ENCODE measurements at regions of chr20 and their contacts with region 1.

Region 1: DNA sequence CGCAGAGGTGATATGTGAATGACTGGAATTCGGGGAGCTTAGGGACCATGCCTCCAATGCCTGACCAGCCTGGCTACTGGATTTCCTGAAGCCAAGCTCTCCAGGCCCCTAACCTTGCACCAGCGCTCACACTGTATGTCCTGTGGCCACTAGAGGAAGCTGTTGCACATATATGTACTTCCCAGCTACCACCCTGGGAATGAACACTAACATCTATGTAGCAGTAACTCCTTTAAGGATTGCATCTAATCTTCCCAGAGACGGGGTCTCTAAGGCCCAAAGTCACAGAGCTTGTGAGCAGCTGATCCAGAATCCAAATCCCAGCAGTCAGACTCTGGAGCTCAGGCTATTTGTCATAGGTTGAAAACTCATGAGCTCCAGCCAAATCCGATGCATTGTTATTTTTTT is 20.4 kb upstream of the BPIFB1 start:
- DNase-seq: peak; percentile 24
- ATAC-seq: peak; percentile 30
- H3K4me3 Mint-ChIP-seq: no peak overlapping the region
- H3K27ac Mint-ChIP-seq: no peak overlapping the region
- H3K4me1 Mint-ChIP-seq: no peaks in the 10 kb centered on the region
- H3K27me3 Mint-ChIP-seq: peaks cover 12% of the 10 kb centered on the region
- CTCF ChIP-seq: peak; percentile 26

Region 2: GRCh38 chr20:33133373-33133941 is 129.2 kb before region 1 on chr20:
- CTCF ChIA-PET with region 1: no interaction called
- POLR2A ChIA-PET with region 1: no interaction called
- intact Hi-C with region 1: no loop called
- DNase-seq: no peak
- ATAC-seq: no peak
- H3K4me3 Mint-ChIP-seq: no peak overlapping the region
- H3K27ac Mint-ChIP-seq: no peak overlapping the region
- H3K4me1 Mint-ChIP-seq: no peaks in the 10 kb centered on the region
- H3K27me3 Mint-ChIP-seq: peaks cover 4% of the 10 kb centered on the region
- CTCF ChIP-seq: no peak

Region 3: DNA sequence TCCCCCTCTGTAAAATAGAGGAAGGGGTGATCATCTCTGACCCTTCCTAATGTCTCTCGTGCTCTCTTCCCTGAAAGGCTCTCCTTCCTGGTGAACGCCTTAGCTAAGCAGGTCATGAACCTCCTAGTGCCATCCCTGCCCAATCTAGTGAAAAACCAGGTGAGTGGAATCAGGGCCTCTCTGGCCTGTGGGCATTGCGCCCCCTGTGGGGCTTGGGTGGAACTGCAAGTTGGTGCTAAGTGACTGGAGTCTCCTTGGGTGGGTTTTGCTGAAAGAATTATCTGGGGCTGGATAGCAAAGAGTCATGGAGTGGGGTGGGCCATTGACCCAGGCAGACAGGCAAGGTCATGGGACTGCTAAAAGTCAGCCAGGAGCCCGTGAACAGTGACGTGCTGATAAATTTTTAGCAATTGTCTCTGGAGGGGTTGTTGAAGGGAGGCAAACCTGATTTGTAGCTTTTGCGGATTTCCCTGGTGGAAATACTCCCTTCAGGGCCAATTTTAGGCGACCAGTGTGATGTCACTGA is 29.2 kb after region 1 on chr20:
- CTCF ChIA-PET with region 1: interaction called, 13 read pairs
- POLR2A ChIA-PET with region 1: no interaction called
- intact Hi-C with region 1: no loop called
- DNase-seq: peak; percentile 78
- ATAC-seq: peak; percentile 60
- H3K4me3 Mint-ChIP-seq: no peak overlapping the region
- H3K27ac Mint-ChIP-seq: no peak overlapping the region
- H3K4me1 Mint-ChIP-seq: no peaks in the 10 kb centered on the region
- H3K27me3 Mint-ChIP-seq: no peaks in the 10 kb centered on the region
- CTCF ChIP-seq: peak; percentile 99

Region 4: DNA sequence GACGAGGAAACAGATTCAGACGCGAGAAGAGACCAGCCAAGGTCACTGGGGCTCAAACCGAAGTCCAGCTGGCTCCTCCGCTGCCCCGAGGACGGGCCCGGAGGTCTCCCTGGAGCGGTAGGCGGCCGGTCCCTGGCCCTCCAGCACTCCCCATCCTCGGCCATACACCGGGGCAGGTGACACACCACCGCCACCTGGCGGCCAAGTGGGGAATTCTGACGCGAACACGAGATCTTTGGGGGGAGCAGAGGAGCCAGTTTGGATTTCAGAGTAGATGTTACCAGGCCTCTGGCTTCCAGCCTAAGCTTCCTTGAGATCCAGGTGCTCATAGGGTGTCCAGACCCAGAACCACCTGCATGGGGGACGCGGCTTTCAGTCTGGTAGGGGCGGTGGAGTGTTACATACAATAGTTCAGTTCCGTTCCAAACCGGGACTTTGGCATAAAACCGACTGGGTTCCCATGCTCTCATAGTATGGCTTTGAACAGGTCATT is 36.5 kb after region 1 on chr20:
- CTCF ChIA-PET with region 1: interaction called, 17 read pairs
- POLR2A ChIA-PET with region 1: no interaction called
- intact Hi-C with region 1: no loop called
- DNase-seq: peak; percentile 81
- ATAC-seq: peak; percentile 92
- H3K4me3 Mint-ChIP-seq: no peak overlapping the region
- H3K27ac Mint-ChIP-seq: no peak overlapping the region
- H3K4me1 Mint-ChIP-seq: no peaks in the 10 kb centered on the region
- H3K27me3 Mint-ChIP-seq: peaks cover 3% of the 10 kb centered on the region
- CTCF ChIP-seq: peak; percentile 90